Endothelial cell of umbilical vein (primary cell): ENCODE measurements at regions of chr22 and their contacts with region 1.

Region 1: GRCh38 chr22:17655289-17655688 is 16.7 kb downstream of the BCL2L13 start:
- DNase-seq: no peak
- H3K4me3 ChIP-seq: no peak overlapping the region
- H3K27ac ChIP-seq: no peak overlapping the region
- H3K4me1 ChIP-seq: no peaks in the 10 kb centered on the region
- H3K27me3 ChIP-seq: no peaks in the 10 kb centered on the region
- CTCF ChIP-seq: no peak
- POLR2A ChIP-seq: no peak

Region 2: DNA sequence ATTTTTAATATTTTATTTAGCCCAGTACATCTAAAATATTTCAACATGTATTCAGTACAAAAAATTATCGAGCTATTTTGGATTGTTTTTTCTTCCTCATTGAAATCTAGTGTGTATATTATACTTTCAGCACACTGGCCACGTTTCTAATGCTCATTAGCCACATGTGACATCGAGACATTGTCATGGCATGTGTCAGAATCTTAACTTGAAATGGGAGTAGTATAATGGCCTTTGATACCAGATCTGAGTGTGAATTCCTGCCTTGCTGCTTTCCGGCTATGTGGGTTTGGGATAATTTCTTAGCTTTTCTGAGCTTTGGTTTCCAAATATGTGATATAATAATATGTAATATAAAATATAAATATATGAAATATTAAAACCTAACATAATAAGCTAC is 37.6 kb after region 1 on chr22:
- CTCF ChIA-PET with region 1: no interaction called
- POLR2A ChIA-PET with region 1: interaction called, 11 read pairs
- dilution Hi-C with region 1: no loop called
- intact Hi-C with region 1: no loop called
- DNase-seq: no peak
- H3K4me3 ChIP-seq: no peak overlapping the region
- H3K27ac ChIP-seq: no peak overlapping the region
- H3K4me1 ChIP-seq: no peaks in the 10 kb centered on the region
- H3K27me3 ChIP-seq: no peaks in the 10 kb centered on the region
- CTCF ChIP-seq: no peak
- POLR2A ChIP-seq: no peak